ENCODE measurements at regions of chr1 and their contacts with region 1.

Region 1: GRCh38 chr1:53889304-53890298 is at the start of gene YIPF1:
- DNase-seq: peak; percentile 81 to 95 (median 94)
- H3K4me3 ChIP-seq: peak within 1 kb of the TSS; percentile 69 to 100 (median 93)
- H3K27ac ChIP-seq: peak within 1 kb of the TSS in 58 of 59 donors; percentile 1 to 92 (median 76)
- H3K27me3 ChIP-seq: no peaks in the 10 kb centered on the region
- CTCF ChIP-seq: peak in 25 of 56 donors; percentile 8 to 50 (median 23)
- total RNA-seq, gene YIPF1: 13.0 to 31.6 (median 23.0) TPM

Region 2: DNA sequence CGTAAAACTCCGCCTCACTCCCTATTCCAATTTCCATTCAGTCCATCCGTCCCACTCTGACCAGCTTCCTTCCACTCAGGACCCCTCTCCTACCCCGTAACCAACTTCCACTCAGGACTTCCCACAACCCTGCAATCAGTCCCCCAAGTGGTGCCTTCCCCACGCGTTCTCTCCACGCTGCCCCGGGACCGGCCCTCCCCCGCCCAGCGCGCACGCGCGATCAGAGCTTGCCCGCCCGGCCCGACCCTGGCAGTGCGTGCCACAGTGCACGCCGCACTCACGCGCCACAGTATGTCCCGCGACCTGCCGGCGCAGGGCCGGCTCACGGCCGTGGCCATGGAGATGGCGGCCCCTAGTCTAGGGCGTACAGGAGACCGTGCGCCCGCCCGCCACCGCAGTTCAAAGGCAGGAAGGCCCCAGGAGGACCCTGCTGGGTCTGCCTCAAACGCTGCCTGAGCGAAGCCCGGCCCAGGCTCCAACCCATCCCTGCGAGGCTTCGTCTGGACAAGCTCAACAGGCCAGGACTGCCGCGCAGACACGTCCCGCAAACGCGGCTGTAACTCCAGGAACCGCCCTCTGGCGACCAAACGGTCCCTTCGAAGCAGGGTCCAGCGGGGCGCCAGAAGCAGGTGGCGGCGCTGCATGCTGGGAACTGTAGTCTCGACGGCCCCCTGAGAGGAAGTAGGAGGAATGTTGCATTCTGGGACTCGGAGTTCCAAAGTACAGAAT is 51.5 kb before region 1 on chr1 and contains the start of gene NDC1:
- intact Hi-C with region 1: loop called in 1 of 2 experiments (anchors 5 kb)
- DNase-seq: peak; percentile 79 to 95 (median 91)
- H3K4me3 ChIP-seq: peak within 1 kb of the TSS; percentile 67 to 97 (median 84)
- H3K27ac ChIP-seq: peak within 1 kb of the TSS; percentile 86 to 100 (median 99)
- H3K27me3 ChIP-seq: no peaks in the 10 kb centered on the region
- CTCF ChIP-seq: peak in 52 of 56 donors; percentile 22 to 73 (median 52)
- total RNA-seq, gene NDC1: 5.4 to 15.8 (median 10.1) TPM

Region 3: GRCh38 chr1:54052934-54053744 is 163.5 kb after region 1 on chr1 and contains the starts of genes TCEANC2 and TMEM59:
- intact Hi-C with region 1: loop called in 1 of 2 experiments (anchors 10 kb)
- DNase-seq: peak; percentile 94 to 99 (median 98)
- H3K4me3 ChIP-seq: peak within 1 kb of the TSS; percentile 71 to 100 (median 95)
- H3K27ac ChIP-seq: peak within 1 kb of the TSS; percentile 82 to 99 (median 96)
- H3K27me3 ChIP-seq: no peaks in the 10 kb centered on the region
- CTCF ChIP-seq: peak in 30 of 56 donors; percentile 4 to 57 (median 29)
- total RNA-seq, gene TCEANC2: 5.2 to 16.1 (median 8.6) TPM
- total RNA-seq, gene TMEM59: 155 to 435 (median 269) TPM

Measured in dorsolateral prefrontal cortex (tissue), 120 donors.